Activated CD8-positive, alpha-beta T cell treated with anti-CD3 and anti-CD28 coated beads, Interleukin-2, amount 10 ng/mL, durations not matched to agents 7 days and 5 days (primary cell): ENCODE measurements at regions of chr3 and their contacts with region 1.

Region 1: GRCh38 chr3:114213627-114214541 is 23.5 kb downstream of the ZNF80 start:
- DNase-seq: peak; percentile 80
- ATAC-seq: peak; percentile 70
- H3K4me3 Mint-ChIP-seq: no peak overlapping the region
- H3K27ac Mint-ChIP-seq: no peak overlapping the region
- H3K4me1 Mint-ChIP-seq: peaks cover 3% of the 10 kb centered on the region
- H3K27me3 Mint-ChIP-seq: no peaks in the 10 kb centered on the region

Region 2: GRCh38 chr3:113531826-113532697 is 681.8 kb before region 1 on chr3 and contains the start of gene SIDT1:
- CTCF ChIA-PET with region 1: no interaction called
- POLR2A ChIA-PET with region 1: interaction called, 12 read pairs
- DNase-seq: peak; percentile 86
- ATAC-seq: peak; percentile 83
- H3K4me3 Mint-ChIP-seq: peak within 1 kb of the TSS; percentile 92
- H3K27ac Mint-ChIP-seq: peak within 1 kb of the TSS; percentile 98
- H3K4me1 Mint-ChIP-seq: peaks cover 49% of the 10 kb centered on the region
- H3K27me3 Mint-ChIP-seq: peaks cover 3% of the 10 kb centered on the region
- total RNA-seq, gene SIDT1: 34.8 to 35.0 TPM

Region 3: DNA sequence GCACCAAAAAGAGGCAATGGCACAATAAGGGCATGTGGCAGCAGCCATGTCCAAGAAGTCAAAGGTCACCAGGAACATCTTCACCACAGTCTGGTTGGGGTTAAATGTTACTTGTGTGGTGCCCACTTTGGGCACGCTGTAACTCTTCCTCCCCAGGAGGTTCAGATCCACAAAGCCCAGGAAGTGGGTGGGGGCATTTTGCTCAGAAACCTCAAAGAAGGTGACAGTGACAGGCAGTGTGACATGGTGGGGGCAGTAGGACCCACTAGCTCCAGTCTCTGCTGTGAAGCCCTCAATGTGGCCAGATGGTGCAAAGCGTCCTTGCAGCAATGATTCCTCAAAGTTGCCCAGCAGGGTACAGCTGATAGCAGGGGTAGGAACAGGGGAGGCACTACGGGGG is 17.7 kb after region 1 on chr3:
- CTCF ChIA-PET with region 1: interaction called, 32 read pairs
- POLR2A ChIA-PET with region 1: interaction called, 119 read pairs
- DNase-seq: peak; percentile 67
- ATAC-seq: peak; percentile 64
- H3K4me3 Mint-ChIP-seq: peak overlapping the region; percentile 43
- H3K27ac Mint-ChIP-seq: peak overlapping the region; percentile 91
- H3K4me1 Mint-ChIP-seq: peaks cover 90% of the 10 kb centered on the region
- H3K27me3 Mint-ChIP-seq: no peaks in the 10 kb centered on the region

Region 4: DNA sequence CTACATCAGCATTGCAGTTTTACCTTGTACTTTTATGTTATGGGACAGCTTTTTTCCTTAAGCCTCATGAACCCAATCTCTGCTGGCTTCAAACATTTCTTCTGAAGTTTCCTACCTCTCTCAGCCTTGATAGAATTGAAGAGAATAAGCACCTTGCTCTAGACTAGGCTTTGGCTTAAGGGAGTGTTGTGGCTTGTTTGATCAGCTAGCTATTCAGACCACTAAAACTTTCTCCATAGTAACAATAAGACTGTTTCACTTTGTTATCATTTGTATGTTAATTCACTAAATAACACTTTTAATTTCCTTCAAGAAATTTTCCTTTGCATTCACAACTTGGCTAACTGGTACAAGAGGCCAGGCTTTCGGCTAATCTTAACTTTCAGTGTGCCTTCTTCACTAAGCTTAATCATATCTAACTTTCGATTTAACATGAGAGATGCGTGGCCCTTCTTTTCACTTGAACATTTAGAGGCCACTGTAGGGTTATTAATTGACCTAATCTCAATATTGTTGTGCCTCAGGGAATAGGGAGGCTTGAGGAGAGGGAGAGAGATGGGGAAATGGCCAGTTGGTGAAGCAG is 71.9 kb after region 1 on chr3:
- CTCF ChIA-PET with region 1: interaction called, 54 read pairs
- POLR2A ChIA-PET with region 1: interaction called, 23 read pairs
- DNase-seq: no peak
- ATAC-seq: peak; percentile 86
- H3K4me3 Mint-ChIP-seq: peak overlapping the region; percentile 53
- H3K27ac Mint-ChIP-seq: peak overlapping the region; percentile 87
- H3K4me1 Mint-ChIP-seq: peaks cover 14% of the 10 kb centered on the region
- H3K27me3 Mint-ChIP-seq: no peaks in the 10 kb centered on the region

Region 5: DNA sequence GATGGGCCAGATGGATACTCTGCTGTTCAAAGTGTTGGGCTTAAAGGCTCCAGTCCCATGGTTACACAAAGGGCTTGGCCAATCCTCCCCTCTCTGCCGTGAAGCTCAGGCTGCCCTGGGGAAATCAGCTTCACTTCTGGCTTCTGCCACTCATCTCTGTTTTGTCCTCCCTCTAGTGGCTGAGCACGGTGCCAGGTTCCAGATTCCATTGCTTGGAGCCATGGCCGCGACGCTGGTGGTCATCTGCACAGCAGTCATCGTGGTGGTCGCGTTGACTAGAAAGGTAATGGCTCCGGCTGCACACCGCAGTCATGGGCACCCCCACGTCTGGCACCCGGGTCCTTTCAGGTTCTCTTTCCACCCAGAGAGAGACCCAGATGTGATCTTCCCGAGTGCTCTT is 85.5 kb after region 1 on chr3:
- CTCF ChIA-PET with region 1: interaction called, 54 read pairs
- POLR2A ChIA-PET with region 1: interaction called, 53 read pairs
- DNase-seq: peak; percentile 43
- ATAC-seq: peak; percentile 63
- H3K4me3 Mint-ChIP-seq: peak overlapping the region; percentile 12
- H3K27ac Mint-ChIP-seq: no peak overlapping the region
- H3K4me1 Mint-ChIP-seq: peaks cover 17% of the 10 kb centered on the region
- H3K27me3 Mint-ChIP-seq: no peaks in the 10 kb centered on the region

Region 6: GRCh38 chr3:114362815-114363214 is 148.9 kb after region 1 on chr3:
- CTCF ChIA-PET with region 1: interaction called, 10 read pairs
- POLR2A ChIA-PET with region 1: interaction called, 5 read pairs
- DNase-seq: no peak
- ATAC-seq: no peak
- H3K4me3 Mint-ChIP-seq: no peak overlapping the region
- H3K27ac Mint-ChIP-seq: no peak overlapping the region
- H3K4me1 Mint-ChIP-seq: no peaks in the 10 kb centered on the region
- H3K27me3 Mint-ChIP-seq: no peaks in the 10 kb centered on the region

Region 7: DNA sequence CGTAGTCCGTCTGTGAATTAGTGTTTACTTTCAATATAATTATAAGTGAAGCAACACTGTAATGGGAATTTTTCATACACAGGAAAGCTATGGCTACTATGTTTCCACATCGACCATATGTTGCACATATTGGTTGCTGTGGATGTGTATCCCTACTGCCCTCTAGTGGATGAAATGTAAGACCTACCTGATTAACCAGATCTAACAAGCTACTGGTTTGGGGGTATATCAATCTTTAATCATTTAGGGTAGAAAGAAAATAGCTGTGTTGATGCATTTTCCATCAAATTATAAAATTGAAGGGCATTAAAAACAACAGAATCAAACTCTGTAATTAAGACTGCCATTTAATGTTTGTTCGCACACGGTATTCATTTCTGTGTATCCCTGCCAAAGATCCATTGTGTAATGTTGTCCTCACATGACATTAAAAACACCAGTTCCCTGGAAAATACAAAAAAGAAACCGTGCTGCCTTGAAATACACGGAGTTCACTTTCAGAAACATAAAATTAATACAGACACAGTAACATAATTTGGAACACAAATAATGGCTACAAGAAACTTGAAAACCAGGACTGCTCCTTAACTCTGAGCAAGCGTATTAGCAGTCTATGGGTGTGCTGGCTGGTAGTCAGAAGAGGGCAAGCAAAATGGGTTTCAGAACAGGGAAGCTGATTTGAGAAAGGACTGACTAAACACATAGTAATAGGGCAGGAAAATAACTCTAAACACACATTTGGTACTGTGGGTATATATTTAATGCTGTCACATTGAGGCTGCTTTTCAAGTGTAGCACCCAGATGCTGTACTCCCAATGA is 205.1 kb after region 1 on chr3:
- CTCF ChIA-PET with region 1: interaction called, 15 read pairs
- POLR2A ChIA-PET with region 1: interaction called, 3 read pairs
- DNase-seq: peak; percentile 28
- ATAC-seq: peak; percentile 86
- H3K4me3 Mint-ChIP-seq: no peak overlapping the region
- H3K27ac Mint-ChIP-seq: no peak overlapping the region
- H3K4me1 Mint-ChIP-seq: peaks cover 6% of the 10 kb centered on the region
- H3K27me3 Mint-ChIP-seq: no peaks in the 10 kb centered on the region